ENCODE measurements at regions of chr12 and their contacts with region 1.

Region 1: GRCh38 chr12:64610149-64610678 is at the start of gene RASSF3:
- DNase-seq: no peak
- H3K4me3 ChIP-seq: peak within 1 kb of the TSS; percentile 71 to 99 (median 88)
- H3K27ac ChIP-seq: peak within 1 kb of the TSS; percentile 90 to 94 (median 93)
- H3K4me1 ChIP-seq: peaks cover 13 to 50% (median 43%) of the 10 kb centered on the region in 4 donors
- H3K27me3 ChIP-seq: no peaks in the 10 kb centered on the region
- CTCF ChIP-seq: no peak
- EP300 ChIP-seq: no peak
- POLR2A ChIP-seq: peak; percentile 6
- total RNA-seq, gene RASSF3: 124 to 299 (median 229) TPM

Region 2: GRCh38 chr12:64551698-64552097 is 58.5 kb before region 1 on chr12:
- intact Hi-C with region 1: loop called (anchors 5 kb)
- DNase-seq: no peak
- H3K4me3 ChIP-seq: no peak overlapping the region
- H3K27ac ChIP-seq: no peak overlapping the region
- H3K4me1 ChIP-seq: peaks cover 7 to 9% (median 8%) of the 10 kb centered on the region in 4 donors
- H3K27me3 ChIP-seq: no peaks in the 10 kb centered on the region
- CTCF ChIP-seq: no peak
- EP300 ChIP-seq: no peak
- POLR2A ChIP-seq: no peak

Region 3: GRCh38 chr12:64571411-64571810 is 38.8 kb before region 1 on chr12:
- intact Hi-C with region 1: loop called (anchors 5 kb)
- DNase-seq: no peak
- H3K4me3 ChIP-seq: no peak overlapping the region
- H3K27ac ChIP-seq: no peak overlapping the region
- H3K4me1 ChIP-seq: peaks cover 20 to 37% (median 26%) of the 10 kb centered on the region in 4 donors
- H3K27me3 ChIP-seq: no peaks in the 10 kb centered on the region
- CTCF ChIP-seq: no peak
- EP300 ChIP-seq: no peak
- POLR2A ChIP-seq: no peak

Region 4: DNA sequence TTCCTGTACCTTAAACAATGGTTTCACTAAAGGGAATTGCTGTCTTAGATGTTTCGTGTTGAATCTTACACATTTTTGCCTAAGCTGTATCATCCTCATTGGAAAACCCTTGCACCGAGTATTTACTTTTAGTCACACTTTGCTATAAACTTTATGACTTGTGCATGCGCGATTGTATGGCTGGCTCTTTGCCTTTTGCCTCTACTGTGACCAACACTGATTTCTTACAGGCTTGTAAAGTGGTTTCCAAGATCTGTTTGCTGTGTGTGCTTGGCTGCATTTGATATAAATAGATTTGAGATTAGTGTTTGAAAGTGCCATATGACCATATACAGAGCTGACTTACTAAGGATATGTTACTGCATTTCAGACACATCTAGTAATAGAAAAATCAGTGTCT is 40.5 kb after region 1 on chr12:
- intact Hi-C with region 1: no loop called
- DNase-seq: no peak
- H3K4me3 ChIP-seq: peak overlapping the region in 1 of 4 donors; percentile 12
- H3K27ac ChIP-seq: peak overlapping the region; percentile 47 to 69 (median 56)
- H3K4me1 ChIP-seq: peaks cover 29 to 83% (median 74%) of the 10 kb centered on the region in 4 donors
- H3K27me3 ChIP-seq: no peaks in the 10 kb centered on the region
- CTCF ChIP-seq: no peak
- EP300 ChIP-seq: no peak
- POLR2A ChIP-seq: no peak

Region 5: DNA sequence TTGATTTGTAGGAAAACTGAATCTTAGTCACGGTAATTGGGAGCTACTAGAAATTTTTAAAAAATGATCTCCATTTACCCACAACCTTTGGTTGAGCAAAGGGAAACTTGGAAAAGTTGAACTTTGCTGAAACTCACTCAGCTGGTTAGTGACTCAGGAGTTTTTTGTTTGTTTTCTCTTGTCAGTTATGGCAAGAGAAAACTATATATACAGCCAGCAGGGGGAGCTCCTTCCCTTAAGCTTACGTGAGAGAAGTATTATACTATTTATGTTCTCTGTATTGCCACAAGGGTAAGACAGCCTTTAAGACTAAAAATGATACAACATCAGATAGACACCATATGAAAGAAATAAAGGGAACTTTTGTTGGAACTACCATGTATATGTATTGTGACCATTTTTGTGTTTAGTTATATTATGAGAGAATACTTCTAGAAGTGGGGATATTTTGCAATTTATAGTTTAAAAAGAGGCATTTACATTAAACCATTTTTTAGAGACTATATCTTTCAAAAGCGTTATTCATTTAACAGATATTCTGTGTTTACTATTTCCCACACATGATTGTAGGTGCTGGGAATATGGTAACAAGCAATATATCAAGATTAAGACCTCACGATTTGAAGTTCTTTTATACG is 186.1 kb after region 1 on chr12:
- intact Hi-C with region 1: no loop called
- DNase-seq: no peak
- H3K4me3 ChIP-seq: no peak overlapping the region
- H3K27ac ChIP-seq: no peak overlapping the region
- H3K4me1 ChIP-seq: no peaks in the 10 kb centered on the region
- H3K27me3 ChIP-seq: peaks cover 0 to 7% (median 0%) of the 10 kb centered on the region in 4 donors
- CTCF ChIP-seq: peak; percentile 55 to 69 (median 63)
- EP300 ChIP-seq: no peak
- POLR2A ChIP-seq: no peak